Kidney (tissue), 22 donors: ENCODE measurements at regions of chr1 and their contacts with region 1.

Region 1: GRCh38 chr1:78839704-78840277 is 166.7 kb downstream of the ADGRL4 start:
- DNase-seq: peak in 2 of 5 donors; percentile 60 to 72
- H3K4me3 ChIP-seq: no peak overlapping the region
- H3K27ac ChIP-seq: no peak overlapping the region
- H3K4me1 ChIP-seq: no peaks in the 10 kb centered on the region
- H3K27me3 ChIP-seq: no peaks in the 10 kb centered on the region
- CTCF ChIP-seq: peak; percentile 57

Region 2: GRCh38 chr1:78716186-78716585 is 123.6 kb before region 1 on chr1:
- intact Hi-C with region 1: no loop called
- DNase-seq: peak in 2 of 5 donors; percentile 17 to 55
- H3K4me3 ChIP-seq: no peak overlapping the region
- H3K27ac ChIP-seq: no peak overlapping the region
- H3K4me1 ChIP-seq: no peaks in the 10 kb centered on the region
- H3K27me3 ChIP-seq: no peaks in the 10 kb centered on the region
- CTCF ChIP-seq: no peak

Region 3: DNA sequence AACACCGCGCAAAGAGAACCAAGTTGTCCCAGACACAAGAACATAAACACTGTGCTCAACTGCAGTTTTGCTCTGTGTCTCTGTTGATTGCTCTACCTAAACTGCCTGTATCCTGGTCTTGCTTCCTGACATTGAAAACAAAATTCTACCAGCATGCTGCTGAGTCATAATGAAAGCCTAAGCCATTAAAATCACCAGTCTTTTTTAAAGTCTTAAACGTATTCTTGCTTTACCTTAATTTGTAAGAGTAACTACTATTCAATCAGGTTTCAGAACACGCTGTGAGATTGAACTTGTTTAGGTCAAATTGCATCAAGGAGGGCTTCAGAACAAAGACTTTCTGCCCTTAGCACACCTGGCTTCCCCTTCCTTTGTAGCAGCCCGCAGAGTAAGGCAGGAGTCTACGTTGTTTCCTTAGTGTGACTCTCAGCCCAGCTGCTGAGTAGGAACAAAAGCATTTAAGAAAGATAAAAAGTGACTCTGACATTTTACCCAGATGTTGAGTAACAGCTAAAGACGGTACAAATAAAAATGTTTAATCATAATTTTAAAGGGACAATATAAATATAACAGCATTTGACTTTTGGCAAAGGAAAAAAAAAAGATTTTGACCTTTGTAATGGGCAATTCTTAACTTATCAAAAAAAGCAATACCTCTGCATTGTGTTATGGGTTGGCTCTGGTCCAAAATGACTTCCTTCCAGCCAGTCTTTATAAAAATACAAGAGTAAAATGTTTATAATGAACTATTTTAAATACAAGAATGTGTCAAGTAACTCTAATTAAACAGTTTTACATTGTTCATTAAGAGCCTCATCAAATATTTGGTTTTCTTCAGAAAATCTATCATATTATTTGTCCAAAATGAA is 353.7 kb after region 1 on chr1:
- intact Hi-C with region 1: loop called (anchors 10 kb)
- DNase-seq: peak in 2 of 5 donors; percentile 16 to 38
- H3K4me3 ChIP-seq: no peak overlapping the region
- H3K27ac ChIP-seq: peak overlapping the region in 1 of 2 donors; percentile 35
- H3K4me1 ChIP-seq: no peaks in the 10 kb centered on the region
- H3K27me3 ChIP-seq: no peaks in the 10 kb centered on the region
- CTCF ChIP-seq: no peak